Panc1 (cell line): ENCODE measurements at regions of chr3 and their contacts with region 1.

Region 1: DNA sequence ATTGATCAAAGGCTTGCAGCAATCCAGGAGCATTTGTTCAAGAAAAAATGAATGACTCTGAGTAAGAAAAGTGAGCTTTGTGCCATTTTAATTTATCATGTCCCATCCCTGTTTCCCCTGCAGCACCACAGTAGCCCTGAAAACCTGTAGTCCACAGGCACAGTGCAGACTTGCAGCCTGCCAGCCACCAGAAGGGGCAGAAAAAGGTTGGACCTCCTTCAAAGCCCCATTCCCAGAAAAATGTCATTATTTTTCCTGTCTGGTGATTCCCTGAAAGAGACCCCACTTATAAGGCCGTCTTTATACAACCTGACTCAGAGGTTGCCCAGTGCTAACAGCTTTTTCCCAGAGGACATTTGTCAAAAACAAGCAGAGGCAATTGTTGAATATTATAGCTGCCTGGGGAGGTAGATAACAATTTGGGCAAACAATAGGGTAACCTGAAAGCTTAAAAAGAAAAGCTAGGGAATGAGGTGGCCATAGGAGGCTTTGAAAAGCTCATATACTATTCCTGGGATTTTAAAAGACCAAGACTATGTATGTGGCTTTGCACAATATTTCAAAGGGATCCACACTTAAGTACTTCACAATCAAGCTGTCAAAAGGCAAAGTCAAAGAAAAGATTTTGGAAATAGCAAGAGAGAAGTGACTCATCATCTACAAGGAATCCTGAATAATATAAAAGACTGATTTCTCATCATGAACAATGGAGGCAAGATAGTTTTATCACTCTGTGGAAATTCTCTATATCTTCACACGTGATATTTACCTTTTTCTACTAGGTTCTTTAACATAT is 136.8 kb upstream of the PLXNA1 start:
- DNase-seq: no peak
- ATAC-seq: no peak
- H3K4me3 ChIP-seq: no peak overlapping the region
- H3K27ac ChIP-seq: peak overlapping the region; percentile 27; the same call in 1 of the 2 replicates
- H3K4me1 ChIP-seq: peaks cover 27% of the 10 kb centered on the region
- H3K27me3 ChIP-seq: no peaks in the 10 kb centered on the region
- CTCF ChIP-seq: no peak

Region 2: DNA sequence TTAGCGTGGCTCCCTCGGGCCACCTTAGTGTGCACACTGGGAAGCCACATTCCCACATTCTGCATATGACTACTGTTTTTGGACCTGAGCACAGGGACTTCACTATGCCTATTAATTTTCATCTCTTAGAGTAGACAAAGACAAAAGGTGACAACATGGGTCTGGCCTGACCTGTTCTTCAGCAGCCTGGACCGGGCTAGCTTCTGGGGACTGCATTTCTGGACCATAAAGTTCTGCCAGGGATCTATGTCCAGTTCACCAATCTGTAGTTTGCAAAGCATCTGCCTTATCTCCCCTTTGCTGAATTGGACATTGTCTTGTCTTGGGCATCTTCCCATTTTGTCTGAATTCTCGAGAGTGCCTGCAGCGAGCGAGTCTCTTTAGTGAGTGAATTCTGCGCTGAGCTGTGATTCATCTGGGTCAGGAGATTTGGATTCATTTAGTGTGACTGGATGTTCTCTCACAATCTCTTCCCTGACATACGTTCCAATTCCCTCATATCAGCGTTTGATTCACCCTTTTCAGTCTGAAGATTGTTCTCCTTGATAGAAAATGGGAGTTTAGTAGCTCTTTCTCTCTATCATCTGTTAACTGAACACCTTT is 24.6 kb after region 1 on chr3:
- CTCF ChIA-PET with region 1: no interaction called
- POLR2A ChIA-PET with region 1: no interaction called
- in situ Hi-C with region 1: no loop called
- intact Hi-C with region 1: no loop called
- DNase-seq: no peak
- ATAC-seq: no peak
- H3K4me3 ChIP-seq: no peak overlapping the region
- H3K27ac ChIP-seq: no peak overlapping the region
- H3K4me1 ChIP-seq: no peaks in the 10 kb centered on the region
- H3K27me3 ChIP-seq: no peaks in the 10 kb centered on the region
- CTCF ChIP-seq: no peak

Region 3: DNA sequence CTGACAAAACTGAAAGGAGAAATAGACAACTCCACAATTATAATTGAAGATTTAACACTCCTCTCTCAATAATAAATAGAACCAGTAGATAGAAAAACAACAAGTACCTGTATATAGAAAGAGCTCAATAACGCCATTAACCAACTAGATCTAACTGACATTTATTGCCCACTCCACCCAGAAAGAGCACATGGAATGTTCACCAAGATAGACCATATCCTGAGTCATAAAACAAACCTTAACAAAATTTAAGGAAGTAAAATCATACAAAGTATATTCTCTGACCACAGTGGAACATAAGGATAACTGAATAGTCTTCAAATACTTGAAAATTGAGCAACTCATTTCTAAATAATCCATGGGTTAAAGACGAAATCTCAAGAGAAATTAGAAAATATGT is 1094.0 kb after region 1 on chr3:
- CTCF ChIA-PET with region 1: no interaction called
- POLR2A ChIA-PET with region 1: interaction called, 14 read pairs
- in situ Hi-C with region 1: no loop called
- intact Hi-C with region 1: no loop called
- DNase-seq: no peak
- ATAC-seq: no peak
- H3K4me3 ChIP-seq: no peak overlapping the region
- H3K27ac ChIP-seq: no peak overlapping the region
- H3K4me1 ChIP-seq: no peaks in the 10 kb centered on the region
- H3K27me3 ChIP-seq: peaks cover 35% of the 10 kb centered on the region
- CTCF ChIP-seq: no peak